ENCODE measurements at regions of chr11 and their contacts with region 1.

Region 1: GRCh38 chr11:119624102-119624615 is 104.8 kb downstream of the NECTIN1 start:
- DNase-seq: no peak
- ATAC-seq: peak; percentile 34
- H3K4me3 Mint-ChIP-seq: no peak overlapping the region
- H3K27ac Mint-ChIP-seq: no peak overlapping the region
- H3K4me1 Mint-ChIP-seq: peaks cover 41% of the 10 kb centered on the region
- H3K27me3 Mint-ChIP-seq: peaks cover 4% of the 10 kb centered on the region
- CTCF ChIP-seq: peak; percentile 90

Region 2: DNA sequence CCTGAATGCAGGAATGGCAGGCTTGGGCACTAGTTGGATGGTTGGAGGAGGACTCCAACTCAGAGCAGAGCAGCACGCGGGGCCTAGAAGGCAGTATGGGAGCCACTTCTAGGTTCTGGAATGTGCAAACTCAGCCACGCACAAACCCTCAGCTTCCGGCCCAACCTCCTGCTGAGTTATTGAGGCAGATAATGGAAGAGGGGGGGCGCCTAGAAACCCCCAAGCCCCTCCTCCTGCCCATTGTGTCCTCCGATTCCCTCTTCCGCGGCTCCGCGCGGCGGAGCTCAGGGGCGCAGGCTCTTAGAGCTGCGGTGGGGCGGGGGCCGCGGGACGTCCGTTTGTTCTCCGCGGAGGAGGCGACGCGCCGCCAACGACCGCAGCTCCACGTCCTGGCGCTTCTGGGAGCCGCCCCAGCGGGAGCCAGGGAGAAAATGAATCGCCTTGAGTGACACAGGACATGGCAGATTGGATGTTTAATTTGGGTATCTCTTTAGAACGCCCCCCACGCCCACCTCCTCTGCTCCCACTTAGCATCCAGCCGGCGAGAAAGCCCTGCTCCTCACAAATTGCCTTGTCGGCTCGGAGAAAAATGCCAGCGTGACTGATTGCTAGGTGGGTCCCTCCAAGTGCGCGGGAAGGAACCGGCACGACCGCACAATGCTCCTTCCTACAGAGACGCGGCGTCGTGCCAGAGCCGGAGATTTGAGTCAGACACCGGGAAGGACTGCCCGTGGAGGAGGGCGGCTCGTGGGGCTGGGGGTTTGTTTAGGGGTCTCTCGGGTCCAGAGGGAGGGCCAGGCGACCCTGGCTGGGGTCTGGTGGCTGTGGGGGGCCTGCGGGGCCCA is 39.7 kb before region 1 on chr11:
- CTCF ChIA-PET with region 1: interaction called, 21 read pairs
- POLR2A ChIA-PET with region 1: no interaction called
- DNase-seq: peak; percentile 83
- ATAC-seq: peak; percentile 81
- H3K4me3 Mint-ChIP-seq: peak overlapping the region; percentile 75
- H3K27ac Mint-ChIP-seq: no peak overlapping the region
- H3K4me1 Mint-ChIP-seq: peaks cover 16% of the 10 kb centered on the region
- H3K27me3 Mint-ChIP-seq: peaks cover 44% of the 10 kb centered on the region
- CTCF ChIP-seq: no peak

Region 3: GRCh38 chr11:119634301-119634700 is 10.1 kb after region 1 on chr11:
- CTCF ChIA-PET with region 1: interaction called, 95 read pairs
- POLR2A ChIA-PET with region 1: no interaction called
- DNase-seq: no peak
- ATAC-seq: no peak
- H3K4me3 Mint-ChIP-seq: no peak overlapping the region
- H3K27ac Mint-ChIP-seq: no peak overlapping the region
- H3K4me1 Mint-ChIP-seq: peaks cover 3% of the 10 kb centered on the region; the same call in 1 of the 2 replicates
- H3K27me3 Mint-ChIP-seq: no peaks in the 10 kb centered on the region; the same call in 1 of the 2 replicates
- CTCF ChIP-seq: no peak

Region 4: GRCh38 chr11:119641983-119642745 is 18.0 kb after region 1 on chr11:
- CTCF ChIA-PET with region 1: interaction called, 95 read pairs
- POLR2A ChIA-PET with region 1: no interaction called
- DNase-seq: no peak
- ATAC-seq: peak; percentile 61
- H3K4me3 Mint-ChIP-seq: no peak overlapping the region
- H3K27ac Mint-ChIP-seq: no peak overlapping the region
- H3K4me1 Mint-ChIP-seq: peaks cover 11% of the 10 kb centered on the region
- H3K27me3 Mint-ChIP-seq: peaks cover 12% of the 10 kb centered on the region
- CTCF ChIP-seq: peak; percentile 72

Region 5: GRCh38 chr11:119684361-119685110 is 60.4 kb after region 1 on chr11:
- CTCF ChIA-PET with region 1: no interaction called
- POLR2A ChIA-PET with region 1: no interaction called
- DNase-seq: no peak
- ATAC-seq: peak; percentile 18; the same call in 1 of the 2 replicates
- H3K4me3 Mint-ChIP-seq: no peak overlapping the region
- H3K27ac Mint-ChIP-seq: peak overlapping the region; percentile 23; the same call in 1 of the 2 replicates
- H3K4me1 Mint-ChIP-seq: peaks cover 61% of the 10 kb centered on the region
- H3K27me3 Mint-ChIP-seq: no peaks in the 10 kb centered on the region
- CTCF ChIP-seq: no peak

Region 6: DNA sequence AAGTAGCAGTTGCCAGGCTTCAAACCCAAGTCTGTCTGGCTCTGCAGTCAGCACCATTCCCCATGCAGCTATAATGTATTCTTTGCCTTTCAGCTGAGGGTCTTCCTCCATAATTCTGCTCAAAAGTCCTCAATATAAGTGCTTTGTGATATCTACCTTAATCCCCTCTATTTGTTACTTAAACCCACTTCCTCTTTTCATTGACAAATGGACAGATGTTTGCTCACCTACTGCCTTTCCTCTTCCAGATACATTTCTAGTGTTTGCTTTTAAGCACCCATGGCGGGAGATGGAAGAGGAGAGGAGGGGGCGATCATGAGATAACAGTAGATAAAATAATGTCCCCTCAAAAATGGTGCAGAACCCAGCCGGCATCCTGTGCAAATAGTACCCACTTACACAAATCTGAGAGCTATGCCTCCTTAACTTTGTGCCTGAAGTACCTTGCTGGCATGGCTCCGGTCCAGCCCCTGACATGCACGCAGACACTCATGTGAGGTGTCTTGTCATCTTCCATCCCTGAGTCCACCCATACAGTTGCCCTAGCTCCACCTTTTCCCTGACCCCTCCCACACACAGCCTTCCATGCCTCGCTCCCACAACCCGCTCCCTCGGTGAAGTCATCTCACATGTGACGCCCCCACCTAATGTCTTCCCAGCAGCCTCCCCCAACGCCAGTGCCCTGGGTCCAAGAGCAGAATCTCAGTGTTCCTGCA is 404.2 kb after region 1 on chr11:
- CTCF ChIA-PET with region 1: no interaction called
- POLR2A ChIA-PET with region 1: no interaction called
- DNase-seq: no peak
- ATAC-seq: no peak
- H3K4me3 Mint-ChIP-seq: no peak overlapping the region
- H3K27ac Mint-ChIP-seq: no peak overlapping the region
- H3K4me1 Mint-ChIP-seq: peaks cover 34% of the 10 kb centered on the region
- H3K27me3 Mint-ChIP-seq: peaks cover 7% of the 10 kb centered on the region
- CTCF ChIP-seq: no peak